ENCODE measurements at regions of chr17 and their contacts with region 1.

Region 1: DNA sequence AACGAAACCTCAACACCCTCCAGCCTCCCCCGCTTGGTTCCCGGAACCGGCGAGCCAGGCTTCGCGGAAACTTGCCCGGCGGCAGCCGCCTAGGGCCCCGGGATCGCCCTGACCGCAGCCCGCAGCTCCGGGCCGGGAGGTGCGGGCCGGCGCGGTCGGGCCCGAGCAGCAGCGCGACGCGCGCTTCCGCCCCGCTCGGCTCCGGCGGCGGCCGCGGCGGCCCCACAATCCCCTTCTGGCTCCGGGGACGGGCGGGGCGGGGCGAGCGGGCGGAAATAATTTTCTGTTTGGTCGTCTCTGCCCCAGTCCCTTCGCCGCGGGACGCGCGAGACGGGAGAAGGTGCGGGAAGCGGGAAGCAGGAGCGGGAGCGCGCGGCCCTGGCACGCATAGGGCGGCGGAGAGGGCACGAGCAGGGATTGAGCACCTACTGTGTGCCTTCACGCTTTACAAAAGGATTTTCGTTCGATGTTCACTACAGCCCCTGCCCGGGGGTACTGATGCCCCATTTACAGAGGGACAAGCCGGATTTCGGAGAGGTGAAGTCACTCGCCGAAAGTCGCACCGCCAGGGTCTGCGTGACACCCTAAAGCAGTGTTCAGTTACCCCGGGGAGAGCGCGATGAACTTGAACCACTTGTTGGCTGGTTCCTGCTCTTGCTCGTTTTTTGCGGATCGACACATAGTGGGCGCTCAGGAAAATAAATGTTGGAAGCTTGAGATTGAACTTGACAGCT is 2.7 kb upstream of the MLLT6 start:
- DNase-seq: peak; percentile 90 to 91
- ATAC-seq: peak; percentile 66 to 78 (median 72)
- H3K4me3 ChIP-seq: peak overlapping the region; percentile 60 to 96 (median 90)
- H3K27ac ChIP-seq: peak overlapping the region; percentile 72 to 100 (median 98)
- H3K4me1 ChIP-seq: peaks cover 8 to 66% (median 31%) of the 10 kb centered on the region in 9 donors
- H3K27me3 ChIP-seq: no peaks in the 10 kb centered on the region
- CTCF ChIP-seq: no peak

Region 2: DNA sequence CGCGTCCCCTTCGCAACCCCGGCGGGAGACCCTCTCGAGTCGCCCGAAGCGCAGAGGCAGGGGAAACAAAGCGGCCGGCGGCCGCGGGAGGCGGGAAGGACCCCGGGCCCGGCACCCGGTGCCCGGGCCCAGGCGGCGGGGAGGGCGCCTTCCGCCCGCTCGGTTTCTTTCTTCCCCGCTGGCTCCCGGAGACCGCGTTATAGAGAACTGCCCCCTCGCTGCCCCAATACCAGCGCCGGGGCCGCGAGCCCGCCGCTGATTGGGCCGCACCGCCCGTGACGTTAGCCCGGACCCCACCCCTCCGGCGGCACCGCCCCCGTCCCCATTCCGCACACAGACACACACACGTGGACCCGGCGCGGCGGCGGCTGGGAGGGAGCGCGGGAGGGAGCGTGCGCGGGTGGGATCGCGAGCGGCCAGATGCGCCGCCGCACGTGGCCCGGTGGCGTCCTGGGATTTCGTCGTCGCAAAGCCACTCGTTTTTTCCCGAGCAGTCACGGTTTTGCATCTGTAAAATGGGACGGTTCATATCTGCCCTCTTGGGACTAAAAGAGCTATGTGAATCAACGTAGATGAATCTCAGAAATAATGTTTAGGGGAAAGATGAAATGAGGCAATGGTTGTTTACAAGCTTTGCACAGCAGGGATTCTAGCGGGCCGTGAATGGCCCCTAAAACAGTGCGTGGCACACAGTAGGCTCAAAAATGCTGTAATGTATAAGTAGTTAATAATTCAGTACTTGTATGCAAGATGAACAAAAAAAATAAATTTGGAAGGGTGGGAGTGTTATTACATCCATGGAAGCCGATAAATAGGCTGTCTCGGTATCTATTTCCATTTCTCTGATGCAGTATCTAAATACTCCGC is 27.4 kb before region 1 on chr17 and contains the start of gene EPOP:
- intact Hi-C with region 1: loop called in 1 of 10 experiments (anchors 2 kb)
- DNase-seq: peak; percentile 87 to 88
- ATAC-seq: peak; percentile 85 to 92 (median 90)
- H3K4me3 ChIP-seq: peak within 1 kb of the TSS; percentile 41 to 66 (median 59)
- H3K27ac ChIP-seq: peak within 1 kb of the TSS in 2 of 10 donors; percentile 28 to 56
- H3K4me1 ChIP-seq: peaks cover 8 to 37% (median 30%) of the 10 kb centered on the region in 9 donors
- H3K27me3 ChIP-seq: peaks cover 19 to 63% (median 58%) of the 10 kb centered on the region in 7 donors
- CTCF ChIP-seq: peak in 2 of 9 donors; percentile 4
- total RNA-seq, gene EPOP: 0.25 to 1.3 (median 0.64) TPM

Region 3: GRCh38 chr17:38742411-38743308 is 40.3 kb after region 1 on chr17:
- intact Hi-C with region 1: loop called in 2 of 10 experiments (anchors 5 kb)
- DNase-seq: peak in 1 of 2 donors; percentile 89
- ATAC-seq: peak; percentile 36 to 75 (median 60)
- H3K4me3 ChIP-seq: peak overlapping the region in 4 of 10 donors; percentile 0 to 16 (median 6)
- H3K27ac ChIP-seq: peak overlapping the region; percentile 9 to 88 (median 78)
- H3K4me1 ChIP-seq: peaks cover 12 to 69% (median 53%) of the 10 kb centered on the region in 9 donors
- H3K27me3 ChIP-seq: peaks cover 0 to 19% (median 0%) of the 10 kb centered on the region in 7 donors
- CTCF ChIP-seq: no peak

Region 4: DNA sequence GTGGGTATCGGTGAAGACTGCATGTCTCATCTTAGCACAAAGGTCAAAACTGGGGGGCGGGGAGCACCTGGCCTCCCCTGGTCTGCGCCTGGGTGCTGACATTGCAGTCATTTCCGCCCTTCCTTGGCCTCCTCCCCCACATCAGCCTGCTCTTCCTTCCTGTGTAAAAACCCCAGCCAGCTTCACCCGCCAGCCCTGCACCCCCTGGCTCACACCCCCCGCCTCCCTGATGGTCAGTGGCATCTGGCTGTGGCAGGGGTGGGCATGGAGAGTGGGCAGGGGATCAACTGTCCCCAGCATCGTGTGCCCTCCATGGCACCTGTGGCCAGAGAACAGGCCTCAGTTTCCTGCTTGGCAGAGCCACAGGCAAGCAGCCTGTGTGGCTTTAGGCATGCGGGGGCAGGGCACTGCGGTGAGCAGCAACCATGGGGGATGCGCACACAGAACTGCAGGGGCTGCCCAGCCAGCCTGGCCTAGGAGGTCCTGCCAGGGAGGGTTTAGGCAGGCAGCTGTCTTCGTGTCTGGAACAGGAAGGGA is 196.5 kb after region 1 on chr17:
- intact Hi-C with region 1: no loop called
- DNase-seq: peak in 1 of 2 donors; percentile 43
- ATAC-seq: peak in 4 of 8 donors; percentile 8 to 36 (median 21)
- H3K4me3 ChIP-seq: peak overlapping the region in 1 of 10 donors; percentile 13
- H3K27ac ChIP-seq: peak overlapping the region; percentile 3 to 86 (median 68)
- H3K4me1 ChIP-seq: peaks cover 42 to 98% (median 85%) of the 10 kb centered on the region in 9 donors
- H3K27me3 ChIP-seq: no peaks in the 10 kb centered on the region
- CTCF ChIP-seq: no peak